ENCODE measurements at regions of chr11 and their contacts with region 1.

Region 1: DNA sequence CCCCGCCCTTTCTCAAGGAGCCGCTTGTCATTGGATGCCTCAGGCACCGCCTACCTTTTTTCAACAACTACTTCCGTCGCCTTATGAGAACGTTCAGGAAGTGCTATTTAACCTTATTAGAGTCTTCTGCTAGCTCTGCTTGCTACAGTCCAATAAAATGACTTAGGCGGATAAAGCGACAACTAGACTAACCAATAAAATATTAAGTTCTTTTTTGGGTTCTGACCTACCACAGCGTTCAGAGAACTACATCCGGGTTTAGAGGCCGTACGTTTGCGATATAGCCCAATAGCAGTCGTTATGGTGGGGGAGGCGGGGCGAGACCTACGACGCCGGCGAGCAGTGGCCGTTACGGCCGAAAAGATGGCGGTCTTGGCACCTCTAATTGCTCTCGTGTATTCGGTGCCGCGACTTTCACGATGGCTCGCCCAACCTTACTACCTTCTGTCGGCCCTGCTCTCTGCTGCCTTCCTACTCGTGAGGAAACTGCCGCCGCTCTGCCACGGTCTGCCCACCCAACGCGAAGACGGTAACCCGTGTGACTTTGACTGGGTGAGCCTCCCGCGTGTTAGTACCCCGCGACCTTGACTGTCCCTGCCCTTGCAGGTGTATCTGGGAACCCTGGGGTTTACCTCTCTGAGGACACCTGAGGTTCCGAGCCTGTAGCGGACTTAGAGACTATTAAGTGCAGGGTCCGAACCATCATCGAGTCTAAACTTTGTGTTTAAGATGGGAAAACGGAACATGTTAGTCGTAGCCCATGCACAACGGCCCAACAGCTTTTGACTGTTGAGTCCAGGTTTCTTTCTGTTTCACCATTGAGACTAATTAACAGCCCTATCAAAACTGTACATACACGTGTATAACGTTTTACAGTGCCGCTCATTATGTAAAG is at the start of gene TMX2:
- DNase-seq: peak; percentile 90 to 95
- ATAC-seq: peak; percentile 98
- H3K4me3 ChIP-seq: peak within 1 kb of the TSS; percentile 82 to 99 (median 92)
- H3K27ac ChIP-seq: peak within 1 kb of the TSS; percentile 87 to 91 (median 89)
- H3K4me1 ChIP-seq: peaks cover 33 to 34% of the 10 kb centered on the region in 2 donors
- H3K27me3 ChIP-seq: no peaks in the 10 kb centered on the region
- CTCF ChIP-seq: peak in 1 of 5 experiments; percentile 3
- POLR2A ChIP-seq: peak; percentile 49 to 59
- total RNA-seq, gene TMX2: 29.1 to 54.9 (median 40.5) TPM

Region 2: GRCh38 chr11:57604296-57605027 is 108.0 kb before region 1 on chr11:
- in situ Hi-C with region 1: no loop called
- intact Hi-C with region 1: no loop called
- DNase-seq: no peak
- ATAC-seq: no peak
- H3K4me3 ChIP-seq: no peak overlapping the region
- H3K27ac ChIP-seq: no peak overlapping the region
- H3K4me1 ChIP-seq: no peaks in the 10 kb centered on the region
- H3K27me3 ChIP-seq: peaks cover 0 to 2% (median 1%) of the 10 kb centered on the region in 3 donors
- CTCF ChIP-seq: no peak
- POLR2A ChIP-seq: no peak

Region 3: DNA sequence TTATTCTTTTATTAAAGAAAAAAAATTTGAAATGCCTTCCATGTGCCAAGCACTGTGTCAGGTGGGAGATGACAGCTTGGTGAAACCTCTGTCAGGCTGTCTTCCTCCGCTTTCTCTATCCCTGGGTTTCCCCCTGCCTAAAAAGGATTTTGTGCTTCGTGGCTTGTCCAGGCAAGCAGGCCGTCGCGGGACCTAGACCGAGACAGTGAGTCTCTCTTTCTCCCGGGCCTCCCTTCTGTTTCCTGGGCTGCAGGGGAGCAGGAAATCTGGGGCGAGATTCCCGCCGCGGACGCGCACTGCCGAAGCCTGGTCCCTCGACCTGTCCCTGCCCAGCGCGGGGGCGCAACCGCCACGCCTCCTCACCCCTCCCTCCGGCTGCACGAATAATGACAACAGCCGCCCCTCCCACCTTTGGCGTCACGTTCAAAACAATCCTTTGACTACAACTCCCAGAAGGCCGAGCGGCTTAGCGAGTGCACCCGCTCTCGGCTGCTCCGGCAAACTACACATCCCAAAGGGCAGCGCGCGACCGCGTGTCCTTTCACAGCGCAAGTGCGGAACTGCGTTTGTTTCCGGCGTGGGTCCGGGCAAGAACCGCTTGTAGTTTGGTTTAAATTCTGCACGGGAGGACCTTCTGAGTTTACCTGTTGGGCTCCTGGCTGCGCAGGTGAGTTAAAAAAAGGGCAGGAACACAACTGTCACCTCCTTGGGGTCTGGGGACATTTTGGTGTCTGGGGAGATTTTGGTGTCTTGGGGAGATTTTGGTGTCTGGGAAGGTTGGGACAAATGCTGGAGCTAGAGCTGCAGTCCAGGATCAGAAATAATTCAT is 55.1 kb before region 1 on chr11 and contains the start of gene CLP1:
- in situ Hi-C with region 1: no loop called
- intact Hi-C with region 1: loop called (anchors 1 kb)
- DNase-seq: peak; percentile 99
- ATAC-seq: peak; percentile 99
- H3K4me3 ChIP-seq: peak within 1 kb of the TSS; percentile 62 to 92 (median 79)
- H3K27ac ChIP-seq: peak within 1 kb of the TSS; percentile 84 to 94 (median 91)
- H3K4me1 ChIP-seq: peaks cover 8 to 23% of the 10 kb centered on the region in 2 donors
- H3K27me3 ChIP-seq: no peaks in the 10 kb centered on the region
- CTCF ChIP-seq: no peak
- POLR2A ChIP-seq: peak; percentile 64 to 80
- total RNA-seq, gene CLP1: 10.6 to 15.3 (median 11.2) TPM

Region 4: GRCh38 chr11:57741132-57742086 is 28.9 kb after region 1 on chr11 and contains the start of gene SELENOH:
- in situ Hi-C with region 1: no loop called
- intact Hi-C with region 1: loop called (anchors 1 kb)
- DNase-seq: peak; percentile 95 to 96
- ATAC-seq: peak; percentile 95 to 97
- H3K4me3 ChIP-seq: peak within 1 kb of the TSS; percentile 77 to 100 (median 90)
- H3K27ac ChIP-seq: peak within 1 kb of the TSS; percentile 94 to 99 (median 98)
- H3K4me1 ChIP-seq: peaks cover 15 to 17% of the 10 kb centered on the region in 2 donors
- H3K27me3 ChIP-seq: no peaks in the 10 kb centered on the region
- CTCF ChIP-seq: no peak
- POLR2A ChIP-seq: peak; percentile 84
- total RNA-seq, gene SELENOH: 94.7 to 145 (median 132) TPM

Measured in gastrocnemius medialis (tissue), 4 donors.